WTC11 (cell line): ENCODE measurements at regions of chr7 and their contacts with region 1.

Region 1: GRCh38 chr7:100632951-100633717 is 8.2 kb downstream of the TFR2 start:
- DNase-seq: peak; percentile 67
- ATAC-seq: peak; percentile 40
- H3K4me3 Mint-ChIP-seq: peak overlapping the region; percentile 76
- H3K27ac Mint-ChIP-seq: no peak overlapping the region
- H3K4me1 Mint-ChIP-seq: peaks cover 3% of the 10 kb centered on the region
- H3K27me3 Mint-ChIP-seq: peaks cover 41% of the 10 kb centered on the region
- CTCF ChIP-seq: no peak; the same call in 1 of the 2 replicates

Region 2: DNA sequence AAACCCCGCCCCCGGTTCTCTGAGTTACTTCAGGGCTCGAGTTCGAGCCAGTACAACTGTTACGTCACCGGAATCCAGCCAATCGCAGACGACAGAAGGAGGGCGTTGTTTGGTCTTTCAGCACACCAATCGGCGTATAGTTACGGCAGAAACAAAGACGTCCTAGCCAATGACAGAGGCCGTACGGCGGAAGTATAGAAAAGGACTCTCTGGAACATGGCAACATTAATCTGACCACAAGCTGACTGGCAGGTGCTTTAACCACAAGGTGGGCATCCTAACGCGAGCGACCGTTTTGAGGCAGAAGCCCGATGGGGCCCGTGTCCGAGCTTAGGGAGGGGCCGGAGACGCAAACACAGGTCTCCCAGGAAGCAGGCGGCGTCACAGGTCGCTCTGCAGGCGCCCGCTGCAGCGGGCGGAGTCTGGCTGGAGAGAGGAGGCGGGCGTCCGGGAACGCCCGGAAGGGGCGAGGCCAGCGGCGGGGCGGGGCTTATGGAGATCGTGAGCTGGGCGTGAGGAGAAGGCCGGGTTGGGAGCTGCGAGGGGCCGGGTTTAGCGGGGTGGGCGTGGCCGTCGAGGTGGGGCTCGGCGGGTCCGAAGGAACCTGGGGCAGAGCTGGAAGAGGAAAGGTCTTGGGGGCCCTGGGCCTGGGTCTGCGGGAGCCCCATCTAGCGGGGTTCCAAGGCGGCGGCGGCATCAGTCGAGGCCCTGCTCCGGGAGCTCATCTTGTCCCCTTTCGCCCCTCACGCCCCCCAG is 21.0 kb before region 1 on chr7 and contains the start of gene MOSPD3:
- CTCF ChIA-PET with region 1: interaction called, 35 read pairs
- POLR2A ChIA-PET with region 1: interaction called, 12 read pairs
- DNase-seq: peak; percentile 99
- ATAC-seq: peak; percentile 93
- H3K4me3 Mint-ChIP-seq: peak within 1 kb of the TSS; percentile 94
- H3K27ac Mint-ChIP-seq: peak within 1 kb of the TSS; percentile 100
- H3K4me1 Mint-ChIP-seq: peaks cover 6% of the 10 kb centered on the region; the same call in 1 of the 2 replicates
- H3K27me3 Mint-ChIP-seq: no peaks in the 10 kb centered on the region; the same call in 1 of the 2 replicates
- CTCF ChIP-seq: no peak
- total RNA-seq, gene MOSPD3: 21.9 to 22.4 TPM (median 22.0 TPM) in 3 replicates

Region 3: DNA sequence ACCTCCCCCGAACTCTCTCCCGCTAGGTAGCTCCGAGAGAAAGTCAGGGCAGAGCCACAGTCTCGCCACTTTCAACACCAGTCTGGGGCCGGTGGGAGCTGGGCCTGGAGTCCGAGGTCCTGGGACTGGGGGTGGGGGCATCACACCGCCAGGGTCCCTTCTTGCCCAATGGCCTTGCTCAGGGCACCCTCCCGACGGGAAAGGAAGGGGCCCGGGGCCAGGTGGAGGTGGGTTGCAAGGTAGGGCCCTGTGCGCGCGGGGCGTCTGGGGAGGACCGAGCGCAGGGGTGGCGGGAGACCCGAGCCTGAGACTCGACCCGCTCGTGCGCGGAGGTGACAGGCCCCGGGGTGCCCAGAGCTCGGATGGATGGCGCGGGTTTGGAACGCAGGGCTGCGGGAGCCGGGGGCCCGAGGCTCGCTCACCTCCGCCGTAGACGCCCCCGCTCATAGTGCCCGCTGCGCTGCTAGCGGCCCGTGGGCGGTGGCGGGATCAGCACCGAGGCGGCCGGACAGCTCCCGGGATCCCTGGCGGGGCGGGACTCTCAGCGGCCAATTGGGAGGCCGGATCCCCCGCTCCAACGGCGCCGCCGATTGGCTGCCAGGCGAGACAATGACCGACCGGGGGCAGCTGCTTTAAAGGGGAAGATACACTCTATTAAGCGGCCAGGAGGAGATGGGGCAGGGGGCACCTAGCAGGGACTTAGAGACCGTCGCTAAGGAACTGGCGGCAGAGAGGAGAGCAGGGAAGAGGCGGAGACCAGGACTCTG is 23.0 kb after region 1 on chr7 and contains the start of gene ACTL6B:
- CTCF ChIA-PET with region 1: interaction called, 23 read pairs
- POLR2A ChIA-PET with region 1: no interaction called
- DNase-seq: peak; percentile 94
- ATAC-seq: peak; percentile 94
- H3K4me3 Mint-ChIP-seq: 0 out of 2 replicates have a peak within 1 kb of the TSS, but pooled peaks have one; percentile 27
- H3K27ac Mint-ChIP-seq: no peak within 1 kb of the TSS
- H3K4me1 Mint-ChIP-seq: peaks cover 2% of the 10 kb centered on the region; the same call in 1 of the 2 replicates
- H3K27me3 Mint-ChIP-seq: peaks cover 69% of the 10 kb centered on the region
- CTCF ChIP-seq: no peak
- total RNA-seq, gene ACTL6B: 0.96 to 1.3 TPM (median 0.99 TPM) in 3 replicates

Region 4: GRCh38 chr7:100673300-100673941 is 40.3 kb after region 1 on chr7 and contains the start of gene GNB2:
- CTCF ChIA-PET with region 1: interaction called, 24 read pairs
- POLR2A ChIA-PET with region 1: interaction called, 3 read pairs
- DNase-seq: peak; percentile 100
- ATAC-seq: peak; percentile 77
- H3K4me3 Mint-ChIP-seq: peak within 1 kb of the TSS; percentile 88
- H3K27ac Mint-ChIP-seq: peak within 1 kb of the TSS; percentile 92
- H3K4me1 Mint-ChIP-seq: peaks cover 4% of the 10 kb centered on the region
- H3K27me3 Mint-ChIP-seq: peaks cover 39% of the 10 kb centered on the region
- CTCF ChIP-seq: no peak
- total RNA-seq, gene GNB2: 182 to 194 TPM (median 184 TPM) in 3 replicates

Region 5: DNA sequence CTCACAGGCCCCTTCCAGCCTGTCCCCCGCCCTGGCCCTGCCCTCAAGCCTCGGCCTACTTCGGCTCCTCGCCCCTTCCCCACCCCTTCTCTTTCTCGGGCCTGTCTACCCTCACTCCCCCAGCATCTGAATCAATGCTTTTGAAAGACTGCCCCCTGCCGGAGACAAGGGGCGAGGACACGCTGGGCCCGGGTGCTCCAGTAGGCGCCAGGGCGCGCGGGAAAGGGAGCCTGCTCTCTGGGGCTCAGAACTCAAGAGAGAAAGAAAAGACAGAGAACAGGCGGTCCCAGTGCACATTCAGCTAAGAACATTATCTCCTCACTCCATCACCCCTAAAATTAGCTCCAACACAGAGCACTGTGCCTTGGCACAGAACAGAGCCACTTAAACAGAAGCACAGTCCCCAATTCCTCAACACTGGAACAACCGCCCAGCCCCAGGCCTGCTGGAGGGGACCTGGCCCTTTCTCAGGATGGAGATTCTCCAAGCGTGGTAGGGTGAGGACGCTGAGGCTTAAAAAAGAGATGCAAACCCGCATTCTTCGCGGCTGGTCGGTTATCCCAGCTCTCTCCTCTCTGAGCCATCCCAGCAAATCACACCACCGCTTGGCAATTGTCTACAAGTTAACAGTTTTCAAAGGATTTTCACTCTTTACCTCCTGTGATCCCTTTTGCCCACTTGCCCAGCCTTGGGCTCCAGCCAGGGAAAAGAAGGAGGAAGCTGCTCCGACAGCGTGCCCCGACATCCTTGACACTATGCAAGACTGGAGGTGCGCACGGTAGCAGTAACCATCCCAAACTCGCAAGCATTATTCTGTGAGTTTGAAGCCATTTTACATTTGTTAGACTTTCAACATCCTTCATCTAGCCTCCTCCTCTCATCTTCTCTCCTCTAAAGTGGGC is 58.8 kb after region 1 on chr7:
- CTCF ChIA-PET with region 1: interaction called, 43 read pairs
- POLR2A ChIA-PET with region 1: no interaction called
- DNase-seq: peak; percentile 91
- ATAC-seq: peak; percentile 78
- H3K4me3 Mint-ChIP-seq: peak overlapping the region; percentile 96
- H3K27ac Mint-ChIP-seq: peak overlapping the region; percentile 97
- H3K4me1 Mint-ChIP-seq: peaks cover 42% of the 10 kb centered on the region
- H3K27me3 Mint-ChIP-seq: no peaks in the 10 kb centered on the region
- CTCF ChIP-seq: peak; percentile 91